H1 (cell line): ENCODE measurements at regions of chr3 and their contacts with region 1.

Region 1: GRCh38 chr3:118884748-118885206 is 149.9 kb downstream of the IGSF11 start:
- DNase-seq: peak in 1 of 2 experiments; percentile 79
- H3K4me3 ChIP-seq: no peak overlapping the region; a peak in 1 of 8 replicates
- H3K27ac ChIP-seq: no peak overlapping the region
- H3K4me1 ChIP-seq: 0 out of 7 replicates have a peak, but pooled peaks cover 0 to 3% (median 0%) of the 10 kb centered on the region in 4 experiments
- H3K27me3 ChIP-seq: no peaks in the 10 kb centered on the region
- CTCF ChIP-seq: peak; percentile 67 to 97 (median 90)
- EP300 ChIP-seq: no peak
- POLR2A ChIP-seq: no peak
- RAD21 ChIP-seq: peak; percentile 58 to 67

Region 2: GRCh38 chr3:118932822-118933558 is 48.2 kb after region 1 on chr3:
- CTCF ChIA-PET with region 1: interaction called, 19 read pairs
- POLR2A ChIA-PET with region 1: no interaction called
- DNase-seq: no peak
- H3K4me3 ChIP-seq: no peak overlapping the region
- H3K27ac ChIP-seq: no peak overlapping the region
- H3K4me1 ChIP-seq: no peaks in the 10 kb centered on the region
- H3K27me3 ChIP-seq: no peaks in the 10 kb centered on the region
- CTCF ChIP-seq: no peak
- EP300 ChIP-seq: no peak
- POLR2A ChIP-seq: no peak
- RAD21 ChIP-seq: no peak

Region 3: DNA sequence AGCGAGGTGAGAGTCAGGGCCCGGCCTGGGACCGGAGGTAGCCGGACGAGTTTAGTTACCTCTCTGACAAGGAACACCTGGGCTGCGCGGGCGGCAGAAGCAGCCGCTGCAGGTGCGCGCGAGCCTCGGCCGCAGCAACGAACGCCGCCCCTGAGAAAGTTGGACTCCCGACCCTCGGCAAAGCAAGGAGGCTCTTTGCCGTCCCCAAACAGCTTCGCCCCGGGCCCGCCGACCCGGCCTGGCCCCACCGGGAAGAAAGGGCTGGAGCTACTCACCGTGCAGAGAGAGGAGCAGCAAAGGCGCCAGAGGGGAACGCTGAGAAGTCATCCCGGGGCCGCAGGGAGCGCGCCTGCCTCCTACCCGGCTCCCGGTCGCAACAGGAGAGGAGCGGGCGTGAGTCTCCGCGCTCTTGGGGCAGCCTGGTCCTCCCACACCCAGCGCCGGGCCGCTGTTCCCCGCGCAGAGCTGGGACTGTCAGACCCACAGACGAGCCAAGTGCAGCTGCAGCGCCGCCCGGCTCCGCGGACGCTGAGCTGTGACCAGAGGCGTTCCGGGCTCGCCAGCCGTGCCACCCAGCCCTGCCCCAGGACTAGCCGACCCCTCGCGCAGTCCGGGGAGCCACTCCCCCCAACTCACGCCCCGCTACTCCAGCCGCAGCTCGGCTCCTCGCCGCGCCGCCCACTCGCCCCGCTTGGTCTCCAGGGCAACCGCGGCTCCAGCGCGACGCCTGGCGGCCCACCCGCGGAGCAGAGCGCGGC is 149.7 kb after region 1 on chr3 and contains the start of gene IGSF11:
- CTCF ChIA-PET with region 1: interaction called, 84 read pairs
- POLR2A ChIA-PET with region 1: interaction called, 3 read pairs
- DNase-seq: peak; percentile 34 to 86
- H3K4me3 ChIP-seq: peak within 1 kb of the TSS; percentile 56 to 78 (median 64)
- H3K27ac ChIP-seq: no peak within 1 kb of the TSS
- H3K4me1 ChIP-seq: no peaks in the 10 kb centered on the region
- H3K27me3 ChIP-seq: peaks cover 0 to 6% (median 5%) of the 10 kb centered on the region in 4 experiments; a peak in 4 of 7 replicates
- CTCF ChIP-seq: peak; percentile 1 to 23 (median 19); a peak in 3 of 4 replicates
- EP300 ChIP-seq: no peak
- POLR2A ChIP-seq: no peak
- RAD21 ChIP-seq: peak; percentile 9 to 51; a peak in 3 of 4 replicates
- total RNA-seq, gene IGSF11: 1.1 and 1.6 TPM in 2 replicates

Region 4: DNA sequence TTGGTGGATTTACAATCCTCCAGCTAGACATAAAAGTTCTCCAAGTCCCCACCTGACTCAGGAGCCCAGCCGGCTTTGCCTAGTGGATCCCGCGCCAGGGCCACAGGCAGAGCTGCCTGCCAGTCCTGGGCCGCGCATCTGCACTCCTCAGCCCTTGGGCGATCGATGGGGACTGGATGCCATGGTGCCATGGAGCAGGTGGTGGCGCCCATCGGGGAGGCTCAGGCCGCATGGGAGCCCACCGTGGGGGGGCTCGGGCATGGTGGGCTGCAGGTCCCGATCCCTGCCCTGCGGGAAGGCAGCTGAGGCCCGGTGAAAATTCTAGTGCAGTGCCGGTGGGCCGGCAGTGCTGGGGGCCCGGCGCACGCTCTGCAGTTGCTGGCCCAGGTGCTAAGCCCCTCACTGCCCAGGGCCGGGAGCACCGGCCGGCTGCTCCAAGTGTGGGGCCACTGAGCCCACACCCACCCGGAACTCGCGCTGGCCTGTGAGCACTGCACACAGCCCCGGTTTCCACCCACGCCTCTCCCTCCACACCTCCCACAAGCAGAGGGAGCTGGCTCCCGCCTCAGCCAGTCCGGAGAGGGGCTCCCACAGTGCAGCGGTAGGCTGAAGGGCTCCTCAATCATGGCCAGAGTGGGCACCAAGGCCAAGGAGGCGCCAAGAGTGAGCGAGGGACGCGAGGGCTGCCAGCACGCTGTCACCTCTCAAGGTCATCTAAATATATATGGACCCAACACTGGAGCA is 188.7 kb after region 1 on chr3:
- CTCF ChIA-PET with region 1: interaction called, 22 read pairs
- POLR2A ChIA-PET with region 1: no interaction called
- DNase-seq: no peak
- H3K4me3 ChIP-seq: no peak overlapping the region
- H3K27ac ChIP-seq: no peak overlapping the region
- H3K4me1 ChIP-seq: no peaks in the 10 kb centered on the region
- H3K27me3 ChIP-seq: no peaks in the 10 kb centered on the region
- CTCF ChIP-seq: no peak
- EP300 ChIP-seq: no peak
- POLR2A ChIP-seq: no peak
- RAD21 ChIP-seq: no peak

Region 5: GRCh38 chr3:119104031-119104430 is 219.3 kb after region 1 on chr3:
- CTCF ChIA-PET with region 1: interaction called, 619 read pairs
- POLR2A ChIA-PET with region 1: no interaction called
- DNase-seq: no peak
- H3K4me3 ChIP-seq: no peak overlapping the region
- H3K27ac ChIP-seq: no peak overlapping the region
- H3K4me1 ChIP-seq: no peaks in the 10 kb centered on the region
- H3K27me3 ChIP-seq: no peaks in the 10 kb centered on the region
- CTCF ChIP-seq: no peak
- EP300 ChIP-seq: no peak
- POLR2A ChIP-seq: no peak
- RAD21 ChIP-seq: no peak